K562 (cell line): ENCODE measurements at regions of chr7 and their contacts with region 1.

Region 1: GRCh38 chr7:52749880-52750279 is 285.6 kb upstream of the POM121L12 start:
- DNase-seq: peak in 1 of 4 experiments; percentile 1
- ATAC-seq: no peak
- H3K4me3 ChIP-seq: no peak overlapping the region
- H3K27ac ChIP-seq: no peak overlapping the region
- H3K4me1 ChIP-seq: no peaks in the 10 kb centered on the region
- H3K27me3 ChIP-seq: no peaks in the 10 kb centered on the region
- CTCF ChIP-seq: no peak
- EP300 ChIP-seq: no peak
- POLR2A ChIP-seq: no peak
- RAD21 ChIP-seq: no peak

Region 2: GRCh38 chr7:51593628-51594027 is 1156.3 kb before region 1 on chr7:
- CTCF ChIA-PET with region 1: no interaction called
- POLR2A ChIA-PET with region 1: no interaction called
- in situ Hi-C with region 1: loop called (anchors 25 kb)
- intact Hi-C with region 1: no loop called
- DNase-seq: no peak
- ATAC-seq: no peak
- H3K4me3 ChIP-seq: no peak overlapping the region
- H3K27ac ChIP-seq: no peak overlapping the region
- H3K4me1 ChIP-seq: no peaks in the 10 kb centered on the region
- H3K27me3 ChIP-seq: no peaks in the 10 kb centered on the region
- CTCF ChIP-seq: no peak
- EP300 ChIP-seq: no peak
- POLR2A ChIP-seq: no peak
- RAD21 ChIP-seq: no peak

Region 3: GRCh38 chr7:52715692-52716091 is 34.2 kb before region 1 on chr7:
- CTCF ChIA-PET with region 1: no interaction called
- POLR2A ChIA-PET with region 1: no interaction called
- in situ Hi-C with region 1: no loop called
- intact Hi-C with region 1: no loop called
- DNase-seq: no peak
- ATAC-seq: no peak
- H3K4me3 ChIP-seq: no peak overlapping the region
- H3K27ac ChIP-seq: no peak overlapping the region
- H3K4me1 ChIP-seq: no peaks in the 10 kb centered on the region
- H3K27me3 ChIP-seq: no peaks in the 10 kb centered on the region
- CTCF ChIP-seq: no peak
- EP300 ChIP-seq: no peak
- POLR2A ChIP-seq: no peak
- RAD21 ChIP-seq: no peak